ENCODE measurements at regions of chr17 and their contacts with region 1.

Region 1: GRCh38 chr17:35242805-35243560 is at the start of gene SLFN5:
- DNase-seq: peak; percentile 87
- H3K4me3 ChIP-seq: peak within 1 kb of the TSS; percentile 70
- H3K27ac ChIP-seq: peak within 1 kb of the TSS; percentile 85
- H3K27me3 ChIP-seq: no peaks in the 10 kb centered on the region
- CTCF ChIP-seq: no peak
- polyA plus RNA-seq, gene SLFN5: 64.2 and 69.0 TPM in 2 replicates

Region 2: DNA sequence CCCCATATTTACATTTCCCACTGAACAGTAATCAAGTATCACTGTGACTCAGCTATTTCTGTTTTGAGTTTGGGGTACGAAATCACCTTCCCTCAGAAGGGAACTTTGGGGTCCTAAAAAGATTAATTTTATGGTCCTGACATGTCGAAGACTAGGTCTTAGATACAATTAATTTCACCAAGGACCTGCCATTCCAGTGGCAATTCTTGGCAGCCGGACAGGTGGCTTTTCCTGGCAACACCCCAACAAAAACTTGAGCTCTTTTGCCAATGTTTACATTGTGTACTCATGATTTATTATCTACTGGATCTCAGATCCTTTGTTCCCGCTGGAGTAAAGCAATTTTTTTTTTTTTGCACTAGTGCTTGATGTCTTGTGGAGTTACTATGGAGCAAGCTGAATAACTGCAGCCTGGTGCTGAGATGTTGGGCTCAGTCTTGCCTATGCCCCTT is 14.3 kb after region 1 on chr17:
- CTCF ChIA-PET with region 1: no interaction called
- POLR2A ChIA-PET with region 1: interaction called, 11 read pairs
- DNase-seq: no peak
- H3K4me3 ChIP-seq: no peak overlapping the region
- H3K27ac ChIP-seq: peak overlapping the region; percentile 42
- H3K27me3 ChIP-seq: no peaks in the 10 kb centered on the region
- CTCF ChIP-seq: no peak

Region 3: DNA sequence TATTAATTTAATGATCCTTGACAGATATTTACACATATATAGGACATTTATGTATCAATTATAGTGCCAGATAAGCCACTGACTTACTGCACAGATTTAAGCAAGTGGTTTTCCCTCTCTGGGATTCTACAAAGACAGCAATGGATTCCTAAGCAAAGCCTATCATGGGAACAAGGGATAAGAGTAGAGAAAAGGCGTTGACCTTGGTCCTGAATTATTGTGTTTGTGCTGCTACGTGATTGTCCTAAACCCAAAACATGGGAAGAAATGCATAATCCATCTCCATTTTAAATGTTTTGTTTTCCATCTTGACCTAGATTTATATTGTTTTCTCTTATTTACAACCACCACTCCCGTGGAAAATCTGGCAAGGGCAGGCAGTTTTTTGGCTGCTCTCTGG is 116.4 kb after region 1 on chr17:
- CTCF ChIA-PET with region 1: no interaction called
- POLR2A ChIA-PET with region 1: no interaction called
- DNase-seq: no peak
- H3K4me3 ChIP-seq: no peak overlapping the region
- H3K27ac ChIP-seq: no peak overlapping the region
- H3K27me3 ChIP-seq: no peaks in the 10 kb centered on the region
- CTCF ChIP-seq: no peak

Measured in AG04450 (cell line).